Left cardiac atrium (tissue), 4 donors: ENCODE measurements at regions of chr7 and their contacts with region 1.

Region 1: GRCh38 chr7:2104107-2104710 is 128.5 kb downstream of the MAD1L1 start:
- DNase-seq: peak; percentile 90
- ATAC-seq: peak; percentile 85

Region 2: DNA sequence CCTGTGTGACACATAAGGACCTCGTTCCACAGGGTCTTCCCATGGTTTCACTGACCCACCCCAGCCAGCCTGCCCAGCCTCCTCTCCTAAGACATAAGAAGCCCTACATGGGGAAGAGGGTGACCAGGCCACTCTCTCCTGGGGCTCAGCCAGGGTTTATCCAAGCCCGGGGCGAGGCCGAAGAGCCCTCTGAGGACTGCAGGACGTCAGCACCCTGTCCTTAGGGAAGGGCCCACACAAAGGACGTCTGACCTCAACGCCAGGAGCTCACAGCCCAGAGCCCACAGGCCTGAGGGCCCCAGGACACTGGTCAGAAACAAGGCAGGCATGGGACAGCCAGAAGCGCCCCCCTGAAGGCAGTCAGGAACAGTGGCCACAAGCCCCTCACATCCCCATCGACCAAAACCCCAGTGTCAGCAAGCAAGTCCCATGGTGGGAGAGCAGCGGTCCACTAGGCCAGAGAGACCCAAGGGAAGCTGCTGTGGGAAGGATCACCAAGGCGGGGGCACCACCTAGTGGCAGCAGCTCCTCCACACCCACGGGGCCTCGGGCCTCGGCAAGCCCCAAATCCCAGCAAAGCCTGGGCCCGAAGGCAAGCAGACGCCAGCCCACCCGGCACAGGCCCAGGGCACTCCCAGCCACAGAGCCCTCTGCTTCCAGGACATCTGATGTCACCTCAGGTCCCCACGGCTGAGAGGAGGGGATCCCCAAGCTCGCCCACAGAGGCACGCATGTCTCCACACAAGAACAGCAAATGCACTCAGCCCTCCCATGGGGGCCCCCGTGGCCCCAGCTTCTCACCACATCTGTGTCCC is 105.1 kb after region 1 on chr7:
- intact Hi-C with region 1: loop called in 1 of 2 experiments (anchors 5 kb)
- DNase-seq: peak; percentile 78
- ATAC-seq: peak; percentile 65 to 85